Adrenal gland (tissue), 19 donors: ENCODE measurements at regions of chr11 and their contacts with region 1.

Region 1: GRCh38 chr11:94638902-94639373 is 71.8 kb downstream of the PIWIL4 start:
- DNase-seq: no peak
- H3K4me3 ChIP-seq: no peak overlapping the region
- H3K27ac ChIP-seq: peak overlapping the region in 4 of 5 donors; percentile 25 to 80 (median 58)
- H3K4me1 ChIP-seq: peaks cover 0 to 18% of the 10 kb centered on the region in 2 donors
- H3K27me3 ChIP-seq: no peaks in the 10 kb centered on the region
- CTCF ChIP-seq: no peak
- POLR2A ChIP-seq: no peak

Region 2: DNA sequence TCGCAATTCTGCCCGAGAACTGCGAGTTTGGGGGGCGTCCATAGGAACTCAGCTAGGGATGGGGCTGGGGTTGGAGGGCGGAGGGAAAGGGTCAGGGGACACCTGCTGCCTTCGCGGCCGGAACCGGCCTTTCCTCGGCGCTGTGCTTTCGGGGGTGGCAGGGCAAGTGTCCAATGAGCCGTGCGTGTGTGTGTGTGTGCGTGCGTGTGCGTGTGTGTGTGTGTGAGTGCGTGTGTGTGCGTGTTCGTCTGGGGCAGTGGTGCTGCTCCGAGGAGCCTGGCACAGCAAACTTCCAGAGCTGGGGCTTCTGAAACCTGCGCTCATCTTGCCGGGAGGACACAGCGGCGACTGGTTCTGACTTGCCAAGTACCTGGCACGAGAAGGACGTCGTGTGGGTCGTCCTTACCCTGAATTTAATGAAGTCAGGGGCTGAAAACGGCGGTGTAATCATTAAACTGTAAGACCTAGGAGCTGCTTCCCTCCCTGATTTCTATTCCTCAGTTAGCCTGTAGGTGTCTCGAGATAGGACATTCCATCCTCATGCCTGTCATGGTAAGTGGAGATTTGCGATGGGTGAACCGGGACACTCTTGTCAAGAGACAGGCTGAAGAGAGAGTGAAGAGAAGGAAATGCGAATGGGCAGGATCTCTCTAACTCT is 102.2 kb after region 1 on chr11:
- intact Hi-C with region 1: loop called in 1 of 2 experiments (anchors 10 kb)
- DNase-seq: peak in 6 of 7 donors; percentile 3 to 62 (median 28)
- H3K4me3 ChIP-seq: peak overlapping the region in 2 of 4 donors; percentile 21 to 72
- H3K27ac ChIP-seq: peak overlapping the region in 1 of 5 donors; percentile 21
- H3K4me1 ChIP-seq: no peaks in the 10 kb centered on the region
- H3K27me3 ChIP-seq: peaks cover 5% of the 10 kb centered on the region
- CTCF ChIP-seq: peak; percentile 11 to 59 (median 44)
- POLR2A ChIP-seq: no peak